ENCODE measurements at regions of chr11 and their contacts with region 1.

Region 1: DNA sequence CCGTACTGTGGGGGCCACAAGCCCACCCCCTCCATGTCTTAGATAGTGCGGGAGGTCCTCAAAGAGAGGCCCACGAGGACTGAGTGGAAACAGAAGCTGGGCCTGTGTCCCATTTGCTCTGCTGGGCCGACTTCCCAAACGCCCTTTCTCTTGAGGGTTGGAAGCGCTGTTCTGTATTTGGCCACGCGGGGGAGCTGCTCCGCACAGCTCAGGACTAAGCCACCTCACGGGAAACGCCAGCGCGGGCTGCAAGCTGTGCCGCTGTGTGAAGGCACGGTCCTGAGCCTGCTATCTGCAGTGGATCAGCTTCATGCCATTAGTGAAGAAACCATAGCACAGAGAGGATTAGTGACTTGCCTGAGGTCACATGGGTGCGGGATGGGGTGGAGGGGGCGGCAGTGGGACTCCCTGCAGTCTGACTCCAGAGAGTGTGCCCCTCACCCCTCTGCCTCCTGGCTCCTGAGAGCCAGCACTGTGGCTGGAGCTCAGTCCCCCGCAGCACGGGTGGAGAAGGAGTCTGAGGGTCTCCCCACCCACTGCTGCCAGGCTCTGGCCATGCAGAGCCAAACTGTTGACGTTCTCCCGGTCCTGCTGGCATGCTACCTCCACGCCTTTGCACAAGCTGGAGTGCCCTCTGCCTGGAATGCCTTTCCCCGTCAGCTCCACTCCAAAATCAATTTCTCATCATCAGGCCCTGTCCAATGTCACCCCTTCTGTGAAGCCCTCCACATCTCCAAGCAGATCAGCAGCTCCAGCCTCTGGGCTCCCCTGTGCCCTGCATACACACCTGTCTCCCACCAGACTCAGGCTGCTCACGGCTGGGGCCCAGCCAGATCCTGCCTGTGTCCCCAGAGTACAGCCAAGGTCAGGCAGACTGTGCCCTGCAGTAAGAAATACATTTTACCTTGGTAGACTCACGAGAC is 51.5 kb upstream of the LRRC32 start:
- DNase-seq: no peak
- H3K4me3 ChIP-seq: no peak overlapping the region
- H3K27me3 ChIP-seq: peaks cover 13% of the 10 kb centered on the region
- CTCF ChIP-seq: peak; percentile 97

Region 2: GRCh38 chr11:76664578-76665061 is 57.4 kb before region 1 on chr11:
- CTCF ChIA-PET with region 1: no interaction called
- POLR2A ChIA-PET with region 1: no interaction called
- DNase-seq: no peak
- H3K4me3 ChIP-seq: no peak overlapping the region
- H3K27me3 ChIP-seq: no peaks in the 10 kb centered on the region
- CTCF ChIP-seq: no peak

Region 3: DNA sequence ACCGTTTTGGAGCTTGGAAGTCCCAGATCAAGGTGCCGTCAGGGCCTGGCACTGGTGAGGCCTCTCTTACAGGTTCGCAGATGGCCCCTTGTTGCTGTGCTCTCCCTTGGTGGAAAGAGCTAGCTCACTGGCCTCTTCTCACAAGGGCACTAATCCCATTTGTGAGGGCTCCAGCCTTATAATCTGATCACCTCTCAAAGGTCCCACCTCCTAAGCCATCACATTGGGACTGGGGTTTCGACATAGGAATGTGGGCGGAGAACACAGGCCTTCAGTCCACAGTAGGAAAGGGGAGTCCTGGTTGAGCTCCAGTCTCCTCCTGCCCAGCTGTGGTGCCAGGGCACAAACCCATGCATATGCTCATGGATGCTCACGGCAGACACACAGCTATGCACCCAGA is 37.5 kb before region 1 on chr11:
- CTCF ChIA-PET with region 1: no interaction called
- POLR2A ChIA-PET with region 1: no interaction called
- DNase-seq: no peak
- H3K4me3 ChIP-seq: no peak overlapping the region
- H3K27me3 ChIP-seq: peaks cover 6% of the 10 kb centered on the region
- CTCF ChIP-seq: no peak

Region 4: DNA sequence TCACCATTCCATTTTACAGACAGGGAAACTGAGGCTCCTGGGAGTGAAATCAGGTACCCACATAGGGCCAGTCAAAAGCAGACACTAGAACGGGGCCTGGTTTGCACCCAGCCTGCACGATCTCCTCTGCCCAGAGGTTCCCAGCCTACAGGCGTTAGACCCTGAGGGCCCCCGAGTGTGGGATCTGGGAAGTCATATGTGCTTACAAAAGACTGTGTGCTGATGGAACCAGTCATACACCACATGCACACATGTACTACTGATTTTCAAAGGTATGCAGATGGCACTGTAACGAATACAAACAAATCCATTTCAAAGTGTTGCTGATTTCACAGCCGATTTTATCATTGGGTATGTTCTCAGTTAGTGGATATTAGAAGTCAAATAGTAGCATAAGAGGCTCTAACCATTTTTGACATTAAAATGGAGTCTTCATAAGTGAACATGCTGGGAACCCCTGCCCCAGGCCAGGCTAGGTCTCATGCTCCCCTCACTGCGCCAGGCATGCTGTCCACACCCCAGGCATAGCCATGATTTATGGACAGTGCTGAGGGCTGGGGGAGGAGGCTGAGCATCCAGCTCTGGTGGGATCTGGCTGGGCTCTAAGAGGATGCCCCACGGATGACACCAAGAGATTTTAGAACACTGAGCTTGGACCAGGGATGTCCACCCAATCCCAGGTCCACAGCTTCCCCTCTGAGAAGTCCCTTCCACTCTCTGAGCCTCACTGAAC is 12.9 kb before region 1 on chr11:
- CTCF ChIA-PET with region 1: interaction called, 17 read pairs
- POLR2A ChIA-PET with region 1: no interaction called
- DNase-seq: no peak
- H3K4me3 ChIP-seq: no peak overlapping the region
- H3K27me3 ChIP-seq: peaks cover 14% of the 10 kb centered on the region
- CTCF ChIP-seq: no peak

Measured in BJ (cell line).